MCF 10A (cell line): ENCODE measurements at regions of chr1 and their contacts with region 1.

Region 1: GRCh38 chr1:157963713-157964112 is 29.7 kb upstream of the KIRREL1 start:
- DNase-seq: peak; percentile 91
- H3K4me3 Mint-ChIP-seq: no peak overlapping the region
- H3K27ac Mint-ChIP-seq: no peak overlapping the region
- H3K4me1 Mint-ChIP-seq: peaks cover 25% of the 10 kb centered on the region
- H3K27me3 Mint-ChIP-seq: peaks cover 18% of the 10 kb centered on the region
- CTCF ChIP-seq: peak; percentile 99

Region 2: GRCh38 chr1:157878059-157878458 is 85.7 kb before region 1 on chr1:
- CTCF ChIA-PET with region 1: interaction called, 19 read pairs
- POLR2A ChIA-PET with region 1: interaction called, 3 read pairs
- intact Hi-C with region 1: no loop called
- DNase-seq: peak; percentile 74
- H3K4me3 Mint-ChIP-seq: no peak overlapping the region
- H3K27ac Mint-ChIP-seq: no peak overlapping the region
- H3K4me1 Mint-ChIP-seq: no peaks in the 10 kb centered on the region
- H3K27me3 Mint-ChIP-seq: peaks cover 77% of the 10 kb centered on the region
- CTCF ChIP-seq: peak; percentile 57

Region 3: DNA sequence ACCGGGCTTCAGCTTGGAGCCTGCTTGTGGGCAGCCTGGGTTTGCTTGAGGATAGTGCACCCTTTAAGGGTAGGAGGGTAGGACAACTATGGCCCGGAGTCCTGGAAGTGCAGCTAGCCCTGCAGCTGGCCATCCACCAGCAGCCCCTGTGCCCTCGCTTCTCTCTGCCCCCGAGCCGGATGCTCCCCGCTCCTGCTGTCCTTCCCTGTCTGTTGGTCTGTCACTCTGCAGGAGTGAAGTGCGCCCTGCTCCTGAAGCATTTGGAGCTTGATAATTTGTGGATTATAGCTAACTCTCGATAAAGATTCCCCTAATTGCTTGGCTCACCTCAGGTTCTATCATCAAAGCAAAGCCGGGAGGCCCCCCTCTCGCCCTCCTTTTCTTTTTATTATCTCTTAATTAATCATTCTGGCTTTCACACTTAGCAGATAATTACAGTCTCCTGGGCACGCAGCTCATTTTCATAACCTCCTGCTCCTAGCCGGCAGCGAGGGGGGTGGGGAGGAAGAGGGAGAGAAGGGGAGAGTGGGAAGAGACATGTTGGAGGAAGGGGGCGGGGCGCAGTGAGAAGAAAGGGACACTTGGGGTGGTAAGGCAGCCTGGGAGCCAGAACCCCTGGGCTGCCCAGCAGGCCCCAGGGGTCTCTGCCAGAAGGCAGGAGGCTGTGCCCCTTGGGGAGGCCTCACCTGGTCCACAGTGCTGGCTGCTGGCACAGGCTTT is 44.1 kb after region 1 on chr1:
- CTCF ChIA-PET with region 1: interaction called, 17 read pairs
- POLR2A ChIA-PET with region 1: interaction called, 9 read pairs
- intact Hi-C with region 1: no loop called
- DNase-seq: no peak
- H3K4me3 Mint-ChIP-seq: no peak overlapping the region
- H3K27ac Mint-ChIP-seq: peak overlapping the region; percentile 98
- H3K4me1 Mint-ChIP-seq: peaks cover 92% of the 10 kb centered on the region
- H3K27me3 Mint-ChIP-seq: no peaks in the 10 kb centered on the region
- CTCF ChIP-seq: no peak

Region 4: GRCh38 chr1:158035976-158036583 is 72.4 kb after region 1 on chr1:
- CTCF ChIA-PET with region 1: interaction called, 56 read pairs
- POLR2A ChIA-PET with region 1: interaction called, 13 read pairs
- intact Hi-C with region 1: no loop called
- DNase-seq: peak; percentile 68
- H3K4me3 Mint-ChIP-seq: no peak overlapping the region
- H3K27ac Mint-ChIP-seq: peak overlapping the region; percentile 77
- H3K4me1 Mint-ChIP-seq: peaks cover 45% of the 10 kb centered on the region
- H3K27me3 Mint-ChIP-seq: no peaks in the 10 kb centered on the region
- CTCF ChIP-seq: peak; percentile 92

Region 5: DNA sequence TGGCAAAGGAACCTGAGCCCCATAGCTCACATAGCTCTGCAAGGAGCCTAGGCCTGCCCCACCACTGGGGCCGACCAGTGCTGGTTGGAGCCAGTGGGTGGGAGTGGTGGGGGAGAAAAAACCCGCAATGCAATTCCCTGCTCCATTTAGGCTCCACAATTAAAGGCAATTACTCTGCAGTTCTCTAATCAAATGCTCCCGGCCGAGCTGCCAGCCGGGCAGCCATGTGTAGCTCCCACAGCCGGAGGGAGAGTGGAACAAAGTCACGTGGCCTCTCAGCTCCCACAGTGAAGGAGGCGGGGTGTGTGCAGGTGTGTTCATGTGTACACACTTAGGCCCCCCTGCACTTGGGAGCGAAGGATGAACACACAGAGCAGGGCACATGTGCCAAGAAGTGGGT is 111.4 kb after region 1 on chr1:
- CTCF ChIA-PET with region 1: interaction called, 19 read pairs
- POLR2A ChIA-PET with region 1: no interaction called
- intact Hi-C with region 1: no loop called
- DNase-seq: no peak
- H3K4me3 Mint-ChIP-seq: no peak overlapping the region
- H3K27ac Mint-ChIP-seq: peak overlapping the region; percentile 1
- H3K4me1 Mint-ChIP-seq: peaks cover 16% of the 10 kb centered on the region
- H3K27me3 Mint-ChIP-seq: no peaks in the 10 kb centered on the region
- CTCF ChIP-seq: no peak

Region 6: DNA sequence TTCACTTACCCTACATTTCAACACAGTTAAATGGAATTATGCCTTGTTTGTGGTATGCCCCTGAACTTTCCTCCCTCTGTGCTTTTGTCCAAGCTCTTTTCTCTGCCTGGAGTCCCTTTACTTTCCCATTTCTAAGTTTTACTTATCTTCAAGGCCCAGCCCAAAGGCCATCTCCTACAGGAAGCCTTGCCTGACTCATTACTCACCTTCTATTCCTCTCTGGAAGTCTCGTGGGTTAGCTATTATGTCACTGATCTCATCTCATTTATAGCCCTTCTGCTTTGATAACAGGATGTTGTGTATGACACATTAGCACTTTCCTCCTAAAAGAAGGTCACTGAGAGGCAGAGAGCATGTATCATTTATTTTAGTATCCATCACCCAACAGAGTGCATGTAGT is 138.2 kb after region 1 on chr1:
- CTCF ChIA-PET with region 1: interaction called, 2,587 read pairs
- POLR2A ChIA-PET with region 1: no interaction called
- intact Hi-C with region 1: no loop called
- DNase-seq: peak; percentile 42
- H3K4me3 Mint-ChIP-seq: no peak overlapping the region
- H3K27ac Mint-ChIP-seq: no peak overlapping the region
- H3K4me1 Mint-ChIP-seq: peaks cover 23% of the 10 kb centered on the region
- H3K27me3 Mint-ChIP-seq: no peaks in the 10 kb centered on the region
- CTCF ChIP-seq: no peak

Region 7: DNA sequence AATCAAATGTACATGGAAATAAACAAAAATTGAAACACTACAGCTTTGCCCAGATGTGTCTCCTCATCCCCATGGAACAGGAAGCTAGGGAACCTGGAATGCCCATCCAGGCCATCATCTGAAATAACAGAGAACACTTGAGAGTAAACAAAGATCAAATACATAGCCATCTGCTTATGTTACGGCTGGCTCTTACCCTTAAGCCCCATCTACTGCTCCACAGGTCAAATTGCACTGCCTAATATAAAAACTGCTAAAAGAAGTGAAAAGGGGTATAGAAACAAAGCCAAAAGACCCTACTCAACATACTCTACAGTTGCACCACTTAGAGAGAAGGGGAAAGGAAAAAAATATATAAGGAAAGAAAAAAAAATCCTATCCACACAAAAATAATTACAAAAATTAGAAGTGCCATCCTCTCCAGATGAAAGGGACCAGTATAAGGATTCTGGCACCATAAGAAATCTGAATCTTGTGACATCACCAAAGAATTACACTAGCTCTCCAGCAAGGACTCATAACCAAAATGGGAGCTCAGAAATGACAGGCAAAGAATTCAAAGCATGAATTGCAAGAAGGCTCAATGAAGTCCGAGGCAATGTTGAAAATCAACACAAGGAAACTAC is 563.6 kb after region 1 on chr1:
- CTCF ChIA-PET with region 1: interaction called, 12 read pairs
- POLR2A ChIA-PET with region 1: no interaction called
- intact Hi-C with region 1: loop called (anchors 2 kb)
- DNase-seq: peak; percentile 53
- H3K4me3 Mint-ChIP-seq: no peak overlapping the region
- H3K27ac Mint-ChIP-seq: no peak overlapping the region
- H3K4me1 Mint-ChIP-seq: no peaks in the 10 kb centered on the region
- H3K27me3 Mint-ChIP-seq: peaks cover 100% of the 10 kb centered on the region
- CTCF ChIP-seq: peak; percentile 93